ENCODE measurements at regions of chr1 and their contacts with region 1.

Region 1: GRCh38 chr1:40143891-40144575 is 17.2 kb upstream of the RLF start:
- DNase-seq: peak in 1 of 2 donors; percentile 36
- ATAC-seq: peak; percentile 82

Region 2: DNA sequence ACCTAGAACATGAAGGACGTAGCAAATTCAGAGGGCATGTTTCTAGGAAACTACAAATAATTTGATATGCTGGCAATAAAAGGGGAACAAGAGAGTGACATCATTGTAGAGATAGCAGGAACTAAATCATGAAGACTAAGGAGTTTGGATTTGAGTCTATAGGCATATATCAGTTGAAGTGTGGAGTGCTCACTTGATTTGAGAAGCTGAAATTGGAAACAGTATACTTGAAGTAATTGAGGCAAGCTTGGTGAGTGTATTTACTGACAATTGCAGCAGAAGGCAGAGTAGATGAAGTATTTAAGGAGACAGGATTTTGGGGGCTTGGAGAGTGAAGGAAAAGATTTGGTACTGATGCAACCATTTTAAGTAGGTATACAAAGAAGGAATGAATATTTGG is 97.3 kb after region 1 on chr1:
- intact Hi-C with region 1: loop called in 1 of 2 experiments (anchors 10 kb)
- DNase-seq: no peak
- ATAC-seq: no peak

Region 3: GRCh38 chr1:40404670-40405462 is 260.8 kb after region 1 on chr1:
- intact Hi-C with region 1: loop called in 1 of 2 experiments (anchors 10 kb)
- DNase-seq: no peak
- ATAC-seq: peak; percentile 62

Measured in left colon (tissue), 2 donors.